SK-N-SH (cell line): ENCODE measurements at regions of chr14 and their contacts with region 1.

Region 1: GRCh38 chr14:23294734-23295561 is 7.7 kb downstream of the PPP1R3E start:
- DNase-seq: peak; percentile 54
- H3K4me3 ChIP-seq: peak overlapping the region in 1 of 2 experiments; percentile 20; a peak in 1 of 4 replicates
- H3K27ac ChIP-seq: peak overlapping the region in 1 of 2 experiments; percentile 40; a peak in 1 of 4 replicates
- H3K4me1 ChIP-seq: peaks cover 4 to 11% of the 10 kb centered on the region in 2 experiments; a peak in 3 of 4 replicates
- H3K27me3 ChIP-seq: no peaks in the 10 kb centered on the region
- CTCF ChIP-seq: peak; percentile 94
- EP300 ChIP-seq: peak in 1 of 2 experiments; percentile 29; a peak in 1 of 4 replicates
- RAD21 ChIP-seq: peak; percentile 52

Region 2: DNA sequence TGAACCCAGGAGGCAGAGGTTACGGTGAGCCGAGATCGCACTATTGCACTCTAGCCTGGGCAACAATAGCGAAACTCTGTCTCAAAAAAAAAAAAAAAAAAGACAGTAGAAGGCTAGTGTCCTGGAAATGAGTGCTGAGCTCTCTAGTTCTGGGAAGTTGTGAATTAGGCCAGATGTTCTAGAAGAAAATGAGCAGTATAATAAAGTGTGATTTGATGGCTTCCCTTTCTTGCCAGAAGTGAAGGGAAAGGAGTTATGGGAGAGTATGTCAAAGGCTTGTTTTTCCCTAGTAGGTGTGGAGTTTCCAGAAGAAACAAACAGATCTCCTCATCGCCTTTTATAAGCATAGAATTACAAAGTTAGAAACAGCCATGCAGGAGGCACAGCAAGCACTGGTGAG is 36.7 kb before region 1 on chr14:
- CTCF ChIA-PET with region 1: interaction called, 20 read pairs
- POLR2A ChIA-PET with region 1: no interaction called
- DNase-seq: no peak
- H3K4me3 ChIP-seq: no peak overlapping the region
- H3K27ac ChIP-seq: no peak overlapping the region
- H3K4me1 ChIP-seq: no peaks in the 10 kb centered on the region
- H3K27me3 ChIP-seq: peaks cover 32% of the 10 kb centered on the region; the same call in 1 of the 2 replicates
- CTCF ChIP-seq: no peak
- EP300 ChIP-seq: no peak
- RAD21 ChIP-seq: no peak

Region 3: DNA sequence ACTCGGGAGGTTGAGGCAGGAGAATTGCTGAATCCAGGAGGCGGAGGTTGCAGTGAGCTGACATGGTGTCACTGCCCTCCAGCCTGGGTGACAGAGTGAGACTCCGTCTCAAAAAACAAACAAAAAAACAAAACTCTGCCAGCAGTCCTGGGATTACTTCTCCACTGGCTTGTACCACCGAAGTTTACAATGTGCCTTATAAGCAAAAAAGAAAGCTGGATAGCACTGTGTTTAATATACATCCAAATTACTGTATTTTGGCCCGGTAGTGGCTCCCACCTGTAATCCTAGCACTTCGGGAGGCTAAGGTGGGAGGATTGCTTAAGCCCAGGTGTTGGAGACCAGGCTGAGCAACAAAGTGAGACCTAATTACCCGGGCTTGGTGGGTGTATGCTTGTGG is 25.8 kb before region 1 on chr14:
- CTCF ChIA-PET with region 1: interaction called, 21 read pairs
- POLR2A ChIA-PET with region 1: no interaction called
- DNase-seq: no peak
- H3K4me3 ChIP-seq: no peak overlapping the region
- H3K27ac ChIP-seq: no peak overlapping the region
- H3K4me1 ChIP-seq: no peaks in the 10 kb centered on the region; a peak in 2 of 4 replicates
- H3K27me3 ChIP-seq: no peaks in the 10 kb centered on the region
- CTCF ChIP-seq: no peak
- EP300 ChIP-seq: no peak
- RAD21 ChIP-seq: no peak

Region 4: DNA sequence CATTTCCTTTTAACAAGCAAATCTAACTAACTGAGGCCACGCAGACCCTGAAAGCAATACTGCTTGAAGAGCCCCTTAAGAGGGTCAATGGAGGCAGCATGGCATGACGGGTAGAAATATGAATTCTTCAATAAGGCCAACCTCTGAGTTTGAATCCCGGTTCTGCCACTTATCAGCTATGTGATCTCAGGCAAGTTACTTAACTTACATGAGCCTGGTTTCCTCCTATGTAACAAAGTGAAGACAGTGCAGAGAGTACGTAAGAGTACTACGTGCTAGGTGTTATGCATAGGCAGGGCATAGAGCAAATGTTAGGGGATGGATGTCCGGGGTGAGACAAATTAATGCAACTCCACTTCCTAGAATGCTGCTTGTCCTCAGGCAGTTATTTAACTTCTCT is 13.7 kb before region 1 on chr14:
- CTCF ChIA-PET with region 1: interaction called, 14 read pairs
- POLR2A ChIA-PET with region 1: interaction called, 4 read pairs
- DNase-seq: no peak
- H3K4me3 ChIP-seq: no peak overlapping the region
- H3K27ac ChIP-seq: no peak overlapping the region
- H3K4me1 ChIP-seq: peaks cover 7 to 8% of the 10 kb centered on the region in 2 experiments; a peak in 3 of 4 replicates
- H3K27me3 ChIP-seq: no peaks in the 10 kb centered on the region
- CTCF ChIP-seq: no peak
- EP300 ChIP-seq: no peak
- RAD21 ChIP-seq: no peak

Region 5: DNA sequence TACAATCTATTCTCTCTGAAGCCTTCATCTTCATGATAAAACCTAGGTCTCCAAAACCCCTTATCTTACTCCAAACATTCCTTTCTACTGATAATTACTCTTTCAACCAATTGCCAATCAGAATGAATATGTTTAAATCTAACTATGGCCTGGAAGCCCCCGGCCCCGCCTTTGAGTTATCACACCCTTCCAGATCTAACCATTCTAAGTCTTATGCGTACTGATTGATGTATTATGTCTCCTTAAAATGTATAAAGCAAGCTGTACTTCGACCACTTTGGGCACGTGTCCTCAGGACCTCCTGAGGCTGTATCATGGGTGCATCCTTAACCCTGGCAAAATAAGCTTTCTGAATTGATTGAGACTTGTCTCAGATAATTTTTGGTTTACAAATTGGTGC is 40.7 kb after region 1 on chr14:
- CTCF ChIA-PET with region 1: no interaction called
- POLR2A ChIA-PET with region 1: no interaction called
- DNase-seq: no peak
- H3K4me3 ChIP-seq: no peak overlapping the region
- H3K27ac ChIP-seq: no peak overlapping the region
- H3K4me1 ChIP-seq: no peaks in the 10 kb centered on the region
- H3K27me3 ChIP-seq: peaks cover 13% of the 10 kb centered on the region; the same call in 1 of the 2 replicates
- CTCF ChIP-seq: no peak
- EP300 ChIP-seq: no peak
- RAD21 ChIP-seq: no peak